ENCODE measurements at regions of chr5 and their contacts with region 1.

Region 1: GRCh38 chr5:35089334-35090314 is 41.9 kb upstream of the AGXT2 start:
- ATAC-seq: peak in 4 of 8 experiments; percentile 19 to 92 (median 88)
- H3K4me3 ChIP-seq: no peak overlapping the region
- H3K27ac ChIP-seq: no peak overlapping the region
- H3K4me1 ChIP-seq: peaks cover 2 to 12% of the 10 kb centered on the region in 2 donors

Region 2: DNA sequence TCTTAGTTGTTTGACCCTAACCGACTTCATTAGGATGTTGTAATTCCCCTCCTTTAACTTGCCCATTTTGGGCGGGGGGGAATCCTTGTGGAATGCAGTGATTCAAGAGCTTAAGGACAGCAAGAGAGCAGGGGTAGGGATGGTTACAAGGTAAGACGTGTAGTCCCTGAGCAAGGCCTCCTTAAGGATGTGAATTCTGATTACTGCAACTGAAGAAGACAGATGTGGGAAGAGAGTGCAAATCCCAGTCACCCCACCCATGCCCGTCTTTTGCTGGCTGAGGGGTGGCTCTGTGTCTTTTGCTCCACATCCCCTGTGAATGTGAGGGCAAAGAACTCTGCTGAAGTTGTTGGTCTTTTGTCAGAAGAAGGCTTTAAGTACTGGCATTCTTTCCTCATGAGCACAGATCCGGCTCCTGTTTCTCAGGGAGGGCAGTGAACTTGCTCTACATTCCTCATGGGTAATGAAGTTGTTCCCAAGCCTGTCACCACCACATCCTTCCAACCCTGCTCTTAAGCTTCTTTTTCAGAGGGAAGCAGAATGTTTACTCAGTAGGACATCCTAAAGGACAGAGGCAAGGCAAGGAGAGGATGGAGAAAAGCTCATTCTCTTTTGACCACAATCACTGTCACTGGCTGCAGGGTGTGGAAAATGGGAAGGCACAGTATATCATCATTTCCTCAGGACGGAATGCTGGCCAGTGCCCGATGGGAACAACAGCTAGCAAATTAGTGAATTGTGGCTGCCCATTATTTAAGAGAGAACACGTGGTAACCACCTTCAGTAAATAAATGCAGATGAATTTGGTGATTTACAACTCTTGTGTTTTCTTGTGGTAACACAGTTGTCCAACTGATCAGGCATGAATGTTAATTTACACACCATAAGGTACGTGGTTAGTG is 371.9 kb before region 1 on chr5:
- in situ Hi-C with region 1: no loop called
- ATAC-seq: peak in 6 of 8 experiments; percentile 45 to 79 (median 66)
- H3K4me3 ChIP-seq: no peak overlapping the region
- H3K27ac ChIP-seq: peak overlapping the region in 1 of 2 donors; percentile 21
- H3K4me1 ChIP-seq: peaks cover 18 to 20% of the 10 kb centered on the region in 2 donors

Region 3: DNA sequence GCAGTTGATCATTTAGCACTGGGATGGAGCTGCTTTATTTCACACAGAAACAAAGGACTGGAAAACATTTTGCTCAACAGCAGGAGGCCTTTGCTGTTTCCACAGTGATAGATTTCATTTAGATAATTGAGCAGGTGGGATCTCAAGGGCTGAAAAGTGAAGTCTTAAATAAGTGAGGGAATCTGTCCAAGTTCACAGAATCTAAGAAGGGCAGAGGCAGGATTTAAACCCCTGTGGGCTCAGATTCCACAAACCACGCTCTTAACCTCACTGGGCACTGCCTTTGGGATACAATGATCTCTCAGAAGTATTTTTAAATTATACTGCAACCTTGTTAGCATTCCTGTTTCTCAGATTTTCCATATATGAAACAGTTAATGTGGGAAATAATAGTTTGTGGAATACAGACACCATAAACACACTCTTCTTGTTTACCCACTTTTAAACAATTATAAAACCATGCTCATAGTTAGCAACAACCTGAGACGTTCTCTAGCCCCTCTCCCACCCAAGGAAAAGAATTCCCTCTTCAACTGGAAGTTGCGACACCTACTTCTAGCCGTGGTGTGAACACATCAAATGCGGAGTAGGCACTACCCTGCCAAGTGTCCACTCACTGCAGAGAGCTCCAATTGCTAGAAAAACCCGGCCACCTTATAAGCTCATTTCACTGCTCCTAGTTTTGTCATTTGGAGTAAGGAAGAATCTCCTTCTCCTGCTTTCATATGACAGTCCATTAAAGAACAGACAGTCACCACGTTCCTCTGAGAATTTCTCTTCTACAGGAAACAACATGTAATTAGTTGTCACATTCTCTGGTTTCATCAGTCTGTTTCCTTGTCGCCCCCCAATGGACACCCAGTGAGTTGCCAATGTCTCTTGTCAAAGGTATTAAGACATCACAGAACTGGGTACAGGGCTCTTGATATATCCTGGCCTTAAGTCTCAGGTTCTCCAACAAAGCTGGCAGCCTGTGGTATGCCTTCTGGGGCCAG is 93.2 kb after region 1 on chr5:
- in situ Hi-C with region 1: loop called in 3 of 9 experiments (anchors 10 to 25 kb)
- ATAC-seq: peak in 4 of 8 experiments; percentile 39 to 93 (median 86)
- H3K4me3 ChIP-seq: no peak overlapping the region
- H3K27ac ChIP-seq: no peak overlapping the region
- H3K4me1 ChIP-seq: no peaks in the 10 kb centered on the region

Region 4: GRCh38 chr5:35436410-35437057 is 346.9 kb after region 1 on chr5:
- in situ Hi-C with region 1: loop called in 1 of 9 experiments (anchors 25 kb)
- ATAC-seq: peak in 5 of 8 experiments; percentile 27 to 63 (median 46)
- H3K4me3 ChIP-seq: no peak overlapping the region
- H3K27ac ChIP-seq: no peak overlapping the region
- H3K4me1 ChIP-seq: no peaks in the 10 kb centered on the region

Measured in motor neuron (in vitro differentiated cells).